ENCODE measurements at regions of chr12 and their contacts with region 1.

Region 1: DNA sequence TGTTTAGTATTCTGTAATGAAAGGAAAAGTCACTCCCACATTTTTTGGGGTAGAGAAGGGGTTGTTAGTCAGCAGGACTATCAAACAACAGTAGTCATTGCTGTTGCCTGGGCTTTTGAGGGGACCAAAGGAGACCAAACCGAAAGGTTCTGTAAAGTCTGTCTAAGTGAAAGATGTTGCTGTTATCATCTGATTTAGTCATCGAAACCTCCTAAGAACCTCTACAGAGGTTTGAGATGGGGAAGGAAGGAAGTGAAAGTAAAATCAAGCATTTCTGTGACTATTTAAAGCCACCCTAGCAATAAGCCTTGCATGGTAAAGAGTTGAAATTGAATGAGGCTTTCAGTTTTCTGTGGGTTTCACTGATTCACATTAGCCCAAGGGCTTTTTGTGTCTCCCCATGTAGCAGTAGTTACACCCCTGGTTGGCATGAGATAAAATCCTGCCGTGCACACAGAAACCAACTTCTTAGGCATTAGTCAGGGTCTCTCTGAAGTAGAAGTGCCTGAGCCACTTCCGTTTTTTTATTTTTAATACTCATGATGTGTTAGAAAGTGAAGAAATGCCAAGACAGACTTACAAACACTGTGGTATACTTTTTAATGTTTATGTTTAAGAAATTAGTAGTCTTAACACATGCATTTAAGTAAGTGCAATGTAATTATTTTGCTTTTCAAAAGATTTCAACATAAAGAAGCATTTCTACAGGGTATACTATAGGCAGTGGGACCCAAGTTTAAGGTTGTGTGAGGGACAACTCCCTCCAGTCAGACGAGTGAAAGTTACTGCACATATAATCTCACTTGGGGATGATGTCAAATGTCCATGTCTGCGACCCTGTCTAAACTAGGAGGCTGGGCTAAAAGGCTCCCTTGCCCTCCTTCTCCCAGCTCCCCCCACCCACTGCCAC is 50.4 kb downstream of the DYRK2 start:
- DNase-seq: peak; percentile 56
- H3K4me3 Mint-ChIP-seq: no peak overlapping the region
- H3K27ac Mint-ChIP-seq: peak overlapping the region; percentile 55
- H3K4me1 Mint-ChIP-seq: peaks cover 46% of the 10 kb centered on the region
- H3K27me3 Mint-ChIP-seq: peaks cover 50% of the 10 kb centered on the region

Region 2: DNA sequence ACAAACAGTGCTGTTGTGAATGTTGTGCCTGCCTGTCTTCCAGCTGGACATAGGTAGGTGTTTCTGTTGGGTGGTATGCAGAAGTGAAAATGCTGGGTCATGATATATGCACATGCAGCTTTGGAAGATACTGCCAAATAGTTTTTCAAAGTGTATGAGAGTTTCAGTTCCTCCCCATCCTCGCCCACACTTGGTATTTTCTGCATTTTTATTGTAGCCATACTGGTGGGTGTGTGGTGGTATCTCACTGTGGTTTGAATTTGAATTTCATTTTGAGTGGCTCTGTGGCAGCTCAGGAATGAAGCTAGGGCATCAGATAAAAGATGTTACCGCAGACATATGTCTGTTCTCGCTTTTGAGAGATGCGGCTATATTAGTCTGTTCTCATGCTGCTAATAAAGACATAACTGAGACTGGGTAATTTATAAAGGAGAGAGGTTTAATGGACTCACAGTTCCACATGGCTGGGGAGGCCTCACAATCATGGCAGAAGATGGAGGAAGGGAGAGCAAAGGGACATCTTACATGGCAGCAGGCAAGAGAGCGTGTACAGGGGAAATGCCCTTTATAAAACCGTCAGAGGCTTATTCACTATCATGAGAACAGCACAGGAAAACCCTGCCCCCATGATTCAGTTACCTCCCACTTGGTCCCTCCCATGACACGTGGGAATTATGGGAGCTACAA is 246.7 kb before region 1 on chr12:
- intact Hi-C with region 1: loop called (anchors 1 kb)
- DNase-seq: no peak
- H3K4me3 Mint-ChIP-seq: no peak overlapping the region
- H3K27ac Mint-ChIP-seq: peak overlapping the region; percentile 64
- H3K4me1 Mint-ChIP-seq: peaks cover 37% of the 10 kb centered on the region
- H3K27me3 Mint-ChIP-seq: peaks cover 38% of the 10 kb centered on the region

Region 3: GRCh38 chr12:67630373-67631088 is 68.4 kb before region 1 on chr12:
- intact Hi-C with region 1: loop called (anchors 5 kb)
- DNase-seq: peak; percentile 81
- H3K4me3 Mint-ChIP-seq: peak overlapping the region; percentile 7
- H3K27ac Mint-ChIP-seq: peak overlapping the region; percentile 52
- H3K4me1 Mint-ChIP-seq: peaks cover 42% of the 10 kb centered on the region
- H3K27me3 Mint-ChIP-seq: peaks cover 1% of the 10 kb centered on the region

Region 4: GRCh38 chr12:67804168-67804567 is 105.2 kb after region 1 on chr12:
- intact Hi-C with region 1: loop called (anchors 1 kb)
- DNase-seq: peak; percentile 26
- H3K4me3 Mint-ChIP-seq: no peak overlapping the region
- H3K27ac Mint-ChIP-seq: no peak overlapping the region
- H3K4me1 Mint-ChIP-seq: peaks cover 29% of the 10 kb centered on the region
- H3K27me3 Mint-ChIP-seq: peaks cover 2% of the 10 kb centered on the region

Region 5: GRCh38 chr12:67943226-67943892 is 244.4 kb after region 1 on chr12:
- intact Hi-C with region 1: loop called (anchors 5 kb)
- DNase-seq: peak; percentile 18
- H3K4me3 Mint-ChIP-seq: no peak overlapping the region
- H3K27ac Mint-ChIP-seq: no peak overlapping the region
- H3K4me1 Mint-ChIP-seq: peaks cover 1% of the 10 kb centered on the region
- H3K27me3 Mint-ChIP-seq: peaks cover 16% of the 10 kb centered on the region

Region 6: GRCh38 chr12:68290126-68290525 is 591.2 kb after region 1 on chr12:
- intact Hi-C with region 1: loop called (anchors 2 kb)
- DNase-seq: peak; percentile 36
- H3K4me3 Mint-ChIP-seq: no peak overlapping the region
- H3K27ac Mint-ChIP-seq: no peak overlapping the region
- H3K4me1 Mint-ChIP-seq: peaks cover 35% of the 10 kb centered on the region
- H3K27me3 Mint-ChIP-seq: peaks cover 28% of the 10 kb centered on the region

Region 7: DNA sequence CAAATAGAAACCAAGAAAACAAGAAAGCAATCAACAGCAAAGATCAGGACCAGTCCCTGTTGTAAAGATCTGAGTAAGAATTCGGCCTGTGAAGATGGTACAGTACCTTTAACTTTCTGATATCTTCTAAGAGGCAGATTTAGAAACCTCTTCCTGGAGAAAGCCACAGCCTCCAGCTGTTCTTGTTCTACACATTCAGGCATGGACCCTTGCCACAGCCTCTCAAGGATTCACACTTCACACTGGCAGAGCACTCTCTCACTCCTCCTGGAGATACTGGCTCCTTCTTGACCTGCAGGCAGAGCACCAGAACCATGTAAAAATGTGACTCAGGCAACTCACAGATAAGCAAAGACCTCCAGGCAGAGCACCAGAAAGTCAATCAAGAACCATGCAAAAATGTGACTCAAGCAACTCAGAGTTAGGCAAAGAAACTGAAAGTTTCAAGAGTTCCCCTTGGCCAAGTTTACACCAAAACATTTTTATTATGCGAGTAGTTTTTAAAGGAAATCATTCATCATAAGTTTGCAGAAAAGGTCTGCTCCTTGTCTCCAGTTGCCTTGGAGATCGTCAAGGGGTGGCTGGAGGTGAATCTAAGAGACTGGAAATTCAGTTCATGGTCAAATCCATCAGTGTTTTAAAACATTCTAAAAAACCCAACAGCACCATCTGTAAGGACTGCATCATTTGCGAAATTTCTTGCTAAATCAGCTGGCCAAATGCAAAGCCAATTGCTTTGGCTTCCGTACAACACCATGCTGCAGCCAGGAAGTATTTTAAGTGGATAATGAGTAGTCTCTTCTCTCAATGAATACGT is 752.5 kb after region 1 on chr12:
- intact Hi-C with region 1: loop called (anchors 1 kb)
- DNase-seq: peak; percentile 55
- H3K4me3 Mint-ChIP-seq: peak overlapping the region; percentile 43
- H3K27ac Mint-ChIP-seq: peak overlapping the region; percentile 95
- H3K4me1 Mint-ChIP-seq: peaks cover 78% of the 10 kb centered on the region
- H3K27me3 Mint-ChIP-seq: no peaks in the 10 kb centered on the region

Measured in activated T-helper 2 cell treated with anti-CD3 and anti-CD28 coated beads, Interferon-gamma antibody, Interleukin-2, Interleukin-4, amounts not matched to agents 10 μg/mL and 5 μg/mL and 100 μg/mL, durations not matched to agents 14 hours and 24 hours and 36 hours (primary cell).